Activated CD4-positive, alpha-beta memory T cell treated with anti-CD3 and anti-CD28 coated beads for 36 hours (primary cell): ENCODE measurements at regions of chr12 and their contacts with region 1.

Region 1: GRCh38 chr12:54251667-54252284 is 28.1 kb downstream of the CBX5 start:
- DNase-seq: no peak
- H3K4me3 Mint-ChIP-seq: no peak overlapping the region
- H3K27ac Mint-ChIP-seq: no peak overlapping the region
- H3K4me1 Mint-ChIP-seq: peaks cover 9% of the 10 kb centered on the region
- H3K27me3 Mint-ChIP-seq: no peaks in the 10 kb centered on the region

Region 2: DNA sequence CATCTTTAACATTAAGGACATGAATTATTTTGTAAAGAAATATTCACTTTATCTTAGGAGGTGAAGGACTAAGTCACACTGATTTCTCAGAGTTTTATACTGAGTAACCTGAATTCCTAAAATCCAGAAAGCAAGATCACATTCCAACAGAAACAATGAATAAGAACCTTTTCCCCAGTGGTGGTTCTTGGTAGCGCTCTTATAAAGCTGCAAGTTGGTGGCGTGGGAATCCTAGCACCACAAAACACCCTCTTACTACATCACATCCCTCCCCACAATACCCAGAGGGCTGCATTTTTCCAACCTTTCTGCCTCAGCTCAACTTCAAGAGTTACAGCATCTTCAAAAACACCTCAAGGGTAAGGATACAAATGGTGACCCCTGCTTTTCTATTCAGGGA is 19.0 kb before region 1 on chr12:
- CTCF ChIA-PET with region 1: interaction called, 10 read pairs
- POLR2A ChIA-PET with region 1: no interaction called
- intact Hi-C with region 1: no loop called
- DNase-seq: no peak
- H3K4me3 Mint-ChIP-seq: no peak overlapping the region
- H3K27ac Mint-ChIP-seq: no peak overlapping the region
- H3K4me1 Mint-ChIP-seq: peaks cover 5% of the 10 kb centered on the region
- H3K27me3 Mint-ChIP-seq: no peaks in the 10 kb centered on the region

Region 3: GRCh38 chr12:54240971-54241588 is 10.7 kb before region 1 on chr12:
- CTCF ChIA-PET with region 1: interaction called, 19 read pairs
- POLR2A ChIA-PET with region 1: no interaction called
- intact Hi-C with region 1: no loop called
- DNase-seq: peak; percentile 17
- H3K4me3 Mint-ChIP-seq: no peak overlapping the region
- H3K27ac Mint-ChIP-seq: peak overlapping the region; percentile 78
- H3K4me1 Mint-ChIP-seq: peaks cover 22% of the 10 kb centered on the region
- H3K27me3 Mint-ChIP-seq: no peaks in the 10 kb centered on the region

Region 4: GRCh38 chr12:54273981-54274380 is 22.2 kb after region 1 on chr12:
- CTCF ChIA-PET with region 1: interaction called, 17 read pairs
- POLR2A ChIA-PET with region 1: no interaction called
- intact Hi-C with region 1: no loop called
- DNase-seq: no peak
- H3K4me3 Mint-ChIP-seq: no peak overlapping the region
- H3K27ac Mint-ChIP-seq: no peak overlapping the region
- H3K4me1 Mint-ChIP-seq: peaks cover 77% of the 10 kb centered on the region
- H3K27me3 Mint-ChIP-seq: no peaks in the 10 kb centered on the region

Region 5: DNA sequence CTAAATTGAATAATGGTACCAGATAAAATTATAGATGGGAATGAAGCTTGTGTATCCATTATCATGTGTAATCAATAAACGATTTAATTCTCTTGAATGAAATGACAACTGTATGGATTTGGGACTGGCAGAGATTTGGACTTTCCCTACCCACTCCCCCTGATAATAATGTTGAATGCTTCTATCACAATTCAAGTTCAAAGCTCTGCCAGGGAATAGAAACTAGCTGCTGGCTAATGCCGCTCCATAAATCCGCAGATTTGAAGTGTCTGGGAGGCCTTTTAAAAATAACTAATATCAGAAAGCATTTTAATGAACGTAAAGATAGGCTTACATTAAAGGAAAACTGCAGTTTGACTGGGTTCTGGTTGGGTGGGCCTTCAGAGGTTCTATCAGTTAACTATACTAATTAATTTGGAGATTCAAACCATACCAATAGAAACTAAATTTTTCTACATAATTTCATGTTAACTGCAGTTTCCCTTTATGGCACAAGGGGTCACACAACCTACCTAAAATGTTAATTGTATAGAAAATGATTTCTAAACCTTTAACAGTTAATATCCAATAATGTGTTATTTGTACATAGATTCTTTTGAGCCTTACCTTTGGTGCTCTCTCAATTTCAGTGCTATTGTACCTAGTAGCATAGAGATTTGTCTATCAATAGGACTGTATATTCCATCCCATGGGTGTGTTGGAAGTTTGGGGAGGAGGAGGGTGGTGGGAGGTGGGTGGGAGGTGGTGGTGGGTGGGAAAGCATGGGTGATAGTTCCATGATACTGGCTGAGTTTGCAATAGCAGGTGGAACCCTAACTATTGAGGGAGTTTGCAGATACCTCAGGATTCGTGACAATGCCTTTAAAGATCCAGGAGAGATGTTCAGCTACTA is 33.6 kb after region 1 on chr12:
- CTCF ChIA-PET with region 1: interaction called, 14 read pairs
- POLR2A ChIA-PET with region 1: interaction called, 12 read pairs
- intact Hi-C with region 1: loop called (anchors 5 kb)
- DNase-seq: no peak
- H3K4me3 Mint-ChIP-seq: peak overlapping the region; percentile 47
- H3K27ac Mint-ChIP-seq: peak overlapping the region; percentile 52
- H3K4me1 Mint-ChIP-seq: peaks cover 39% of the 10 kb centered on the region
- H3K27me3 Mint-ChIP-seq: no peaks in the 10 kb centered on the region

Region 6: GRCh38 chr12:54294152-54294952 is 42.6 kb after region 1 on chr12:
- CTCF ChIA-PET with region 1: interaction called, 9 read pairs
- POLR2A ChIA-PET with region 1: no interaction called
- intact Hi-C with region 1: loop called (anchors 5 kb)
- DNase-seq: peak; percentile 79
- H3K4me3 Mint-ChIP-seq: no peak overlapping the region
- H3K27ac Mint-ChIP-seq: no peak overlapping the region
- H3K4me1 Mint-ChIP-seq: peaks cover 3% of the 10 kb centered on the region
- H3K27me3 Mint-ChIP-seq: peaks cover 2% of the 10 kb centered on the region

Region 7: DNA sequence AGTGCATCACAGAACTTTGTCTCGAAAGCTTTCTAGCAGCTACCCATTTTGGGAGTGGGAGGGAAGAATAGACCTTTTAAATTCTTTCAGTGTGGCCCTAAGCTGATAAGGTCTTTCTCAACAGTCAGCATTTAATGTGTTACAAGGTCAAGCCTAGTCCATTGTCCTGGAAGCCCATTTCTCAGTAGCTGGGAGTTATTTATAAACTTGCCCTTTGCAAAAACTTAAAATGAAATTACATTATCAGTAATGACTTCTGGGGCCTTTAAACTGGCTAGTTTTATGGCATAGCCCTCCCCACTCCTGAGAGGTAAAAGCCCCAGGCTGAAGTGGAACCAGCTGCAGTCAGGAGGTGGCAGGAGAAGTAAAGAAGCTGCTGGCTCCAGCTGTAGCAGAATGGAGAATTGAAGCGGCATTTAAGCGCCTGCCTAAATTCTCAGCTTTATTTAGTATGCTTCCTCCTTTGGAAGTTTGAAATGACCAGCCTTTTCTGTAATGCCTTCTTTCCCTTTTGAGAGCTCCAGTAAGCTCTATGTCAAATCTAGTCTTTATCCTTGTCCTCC is 85.6 kb after region 1 on chr12:
- CTCF ChIA-PET with region 1: interaction called, 14 read pairs
- POLR2A ChIA-PET with region 1: no interaction called
- intact Hi-C with region 1: no loop called
- DNase-seq: no peak
- H3K4me3 Mint-ChIP-seq: no peak overlapping the region
- H3K27ac Mint-ChIP-seq: no peak overlapping the region
- H3K4me1 Mint-ChIP-seq: peaks cover 18% of the 10 kb centered on the region
- H3K27me3 Mint-ChIP-seq: no peaks in the 10 kb centered on the region